ENCODE measurements at regions of chr6 and their contacts with region 1.

Region 1: GRCh38 chr6:109705258-109705657 is 14.2 kb downstream of the FIG4 start:
- H3K4me3 Mint-ChIP-seq: no peak overlapping the region
- H3K27ac Mint-ChIP-seq: peak overlapping the region; percentile 93
- H3K4me1 Mint-ChIP-seq: peaks cover 74% of the 10 kb centered on the region
- H3K27me3 Mint-ChIP-seq: no peaks in the 10 kb centered on the region

Region 2: DNA sequence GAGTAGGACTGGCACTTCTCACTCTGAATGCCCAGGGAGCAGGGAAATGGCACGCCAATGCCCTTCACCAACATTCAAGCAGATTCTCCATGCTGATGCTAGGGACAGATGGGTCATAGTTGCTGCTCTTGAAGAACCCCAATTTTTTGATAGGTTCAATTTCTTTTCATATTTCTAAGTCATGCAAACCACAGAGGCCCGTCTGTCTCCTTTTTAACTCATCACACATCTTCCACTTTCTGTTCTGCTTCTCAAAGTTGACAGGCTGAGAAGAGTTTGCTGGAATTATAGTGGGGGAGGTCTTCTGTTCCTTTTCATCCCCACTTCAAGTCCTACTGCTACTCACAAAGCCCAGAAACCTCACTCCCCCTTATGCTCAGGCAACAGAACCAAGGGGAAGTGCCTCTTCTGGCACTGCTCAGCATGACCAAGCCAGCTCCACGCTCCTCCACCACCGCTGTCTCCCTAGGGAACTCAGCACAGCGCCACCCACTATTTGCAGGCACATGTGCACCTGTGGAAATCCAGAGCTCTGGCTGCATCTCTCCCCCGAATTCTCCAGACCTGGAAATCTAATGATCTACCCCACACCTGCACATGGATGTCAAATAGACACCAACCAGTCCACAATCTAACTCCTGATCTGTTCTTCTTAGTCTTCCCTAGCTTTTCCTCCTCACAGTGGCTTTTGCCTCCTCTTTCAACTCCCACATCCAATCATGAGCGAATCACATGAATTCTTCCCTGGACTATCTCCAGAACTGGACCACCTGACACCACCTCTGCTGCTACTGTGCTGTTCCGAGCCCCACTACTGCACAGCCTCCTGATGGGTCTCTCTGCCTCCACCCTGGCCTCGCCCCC is 232.9 kb before region 1 on chr6:
- intact Hi-C with region 1: no loop called
- H3K4me3 Mint-ChIP-seq: no peak overlapping the region
- H3K27ac Mint-ChIP-seq: no peak overlapping the region
- H3K4me1 Mint-ChIP-seq: peaks cover 26% of the 10 kb centered on the region
- H3K27me3 Mint-ChIP-seq: no peaks in the 10 kb centered on the region

Region 3: GRCh38 chr6:109526905-109527628 is 178.2 kb before region 1 on chr6:
- intact Hi-C with region 1: loop called (anchors 5 kb)
- H3K4me3 Mint-ChIP-seq: no peak overlapping the region
- H3K27ac Mint-ChIP-seq: no peak overlapping the region
- H3K4me1 Mint-ChIP-seq: no peaks in the 10 kb centered on the region
- H3K27me3 Mint-ChIP-seq: no peaks in the 10 kb centered on the region

Region 4: DNA sequence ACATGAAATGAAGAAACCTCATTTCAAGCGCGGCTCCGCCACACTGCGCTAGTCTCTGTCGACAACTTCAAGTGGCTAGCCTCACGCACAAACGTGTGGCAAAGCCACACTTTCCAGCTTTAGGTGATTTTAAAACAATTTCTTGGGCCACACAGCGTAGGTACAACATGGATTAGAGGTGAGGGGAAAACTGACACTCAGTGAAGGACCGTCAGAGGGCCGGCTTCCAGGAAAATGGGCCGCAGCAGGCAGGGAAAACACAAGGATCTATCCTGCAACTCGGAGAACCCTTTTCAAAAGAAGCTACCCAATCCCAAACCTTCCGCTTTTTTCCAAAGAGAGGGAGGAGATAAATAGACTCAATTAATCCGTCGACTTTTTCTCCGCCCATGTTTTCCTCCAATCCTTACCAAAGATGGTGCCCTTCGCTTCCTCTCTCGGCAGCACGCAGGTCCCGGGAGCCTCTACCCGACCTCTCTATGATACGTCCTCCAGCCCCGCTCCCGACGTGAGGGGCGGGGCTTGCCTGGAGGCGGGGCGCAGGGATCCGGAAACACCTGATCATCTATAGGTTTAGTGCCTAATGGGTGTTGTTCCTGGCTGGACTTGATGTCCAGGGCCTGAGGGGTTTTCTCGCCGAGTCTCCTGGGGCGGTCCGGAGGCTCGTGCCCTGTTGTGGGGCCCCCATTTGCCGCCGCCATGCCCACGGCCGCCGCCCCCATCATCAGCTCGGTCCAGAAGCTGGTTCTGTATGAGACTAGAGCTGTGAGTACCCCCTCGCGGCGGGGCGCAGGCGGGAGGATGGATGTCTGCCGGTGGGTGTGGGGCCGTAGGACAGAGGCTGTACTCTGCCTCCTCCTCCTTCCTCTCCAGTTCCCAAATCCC is 14.3 kb before region 1 on chr6 and contains the starts of genes AK9 and FIG4:
- intact Hi-C with region 1: loop called (anchors 1 kb)
- H3K4me3 Mint-ChIP-seq: peak within 1 kb of the TSS; percentile 85
- H3K27ac Mint-ChIP-seq: peak within 1 kb of the TSS; percentile 96
- H3K4me1 Mint-ChIP-seq: peaks cover 48% of the 10 kb centered on the region
- H3K27me3 Mint-ChIP-seq: no peaks in the 10 kb centered on the region

Region 5: DNA sequence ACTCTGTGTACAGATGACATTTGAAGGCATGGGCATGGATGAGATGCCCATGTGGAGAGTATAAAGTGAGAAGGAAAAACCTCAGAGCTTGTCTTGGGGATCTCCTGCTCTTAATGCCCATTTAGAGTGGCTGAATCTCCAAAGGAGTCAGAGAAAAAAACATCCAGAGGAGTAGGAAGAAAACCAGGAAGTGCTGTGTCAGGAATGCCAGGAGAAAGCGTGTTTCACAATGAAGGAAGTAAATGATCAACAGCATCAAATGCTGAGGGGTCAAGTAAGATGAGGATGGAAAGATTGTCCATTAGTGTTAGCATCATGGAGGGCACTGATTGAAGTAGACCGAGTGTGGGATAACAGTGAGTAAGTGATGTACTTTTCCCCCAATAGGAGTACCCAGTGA is 42.0 kb after region 1 on chr6:
- intact Hi-C with region 1: no loop called
- H3K4me3 Mint-ChIP-seq: no peak overlapping the region
- H3K27ac Mint-ChIP-seq: no peak overlapping the region
- H3K4me1 Mint-ChIP-seq: no peaks in the 10 kb centered on the region
- H3K27me3 Mint-ChIP-seq: no peaks in the 10 kb centered on the region

Region 6: DNA sequence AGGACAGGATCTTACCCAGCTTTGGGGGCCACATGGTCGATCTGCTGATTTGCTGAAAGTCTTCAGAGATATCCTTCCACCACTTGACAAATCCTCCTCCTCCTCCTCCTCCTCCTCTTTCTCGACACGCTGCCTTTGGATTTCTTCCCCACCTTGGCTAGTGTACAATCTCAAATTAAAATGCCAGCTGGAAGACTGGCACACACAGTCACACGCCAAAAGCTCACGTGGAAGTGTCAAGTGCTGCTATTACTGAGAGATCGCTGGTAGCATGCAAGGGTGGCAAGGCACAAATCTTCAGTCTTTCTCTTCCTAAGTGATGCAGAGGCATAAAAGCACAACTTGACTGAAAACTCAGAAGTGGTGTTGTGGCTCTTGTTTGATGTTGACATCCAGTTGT is 308.1 kb after region 1 on chr6:
- intact Hi-C with region 1: no loop called
- H3K4me3 Mint-ChIP-seq: no peak overlapping the region
- H3K27ac Mint-ChIP-seq: no peak overlapping the region
- H3K4me1 Mint-ChIP-seq: no peaks in the 10 kb centered on the region
- H3K27me3 Mint-ChIP-seq: no peaks in the 10 kb centered on the region

Region 7: DNA sequence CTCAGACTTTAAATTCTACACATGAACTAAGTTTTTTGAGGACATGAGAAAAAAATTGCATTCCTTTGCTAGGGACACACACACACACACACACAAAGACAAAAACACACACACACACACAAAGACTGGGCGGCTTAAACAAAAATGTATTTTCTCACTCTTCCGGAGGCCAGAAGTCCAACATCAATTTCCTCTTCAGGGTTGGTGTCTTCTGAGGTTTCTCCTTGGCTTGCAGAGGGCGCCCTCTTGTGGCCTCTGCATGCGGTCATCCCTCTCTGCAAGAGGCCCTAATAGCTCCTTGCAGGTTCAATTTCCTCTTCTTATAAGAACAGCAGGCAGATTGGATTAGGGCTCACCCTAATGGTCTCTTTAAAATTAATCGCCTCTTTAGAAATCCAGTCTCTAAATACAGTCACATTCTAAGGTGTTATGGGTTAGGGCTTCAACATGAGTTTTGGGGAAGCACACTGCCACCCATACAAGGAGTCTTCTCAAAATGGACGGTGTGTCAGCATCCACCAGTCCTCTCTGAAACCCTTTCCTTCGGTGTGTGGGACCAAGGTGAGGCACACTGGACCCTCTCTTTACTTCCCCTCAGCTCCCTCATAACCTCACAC is 334.2 kb after region 1 on chr6:
- intact Hi-C with region 1: loop called (anchors 1 kb)
- H3K4me3 Mint-ChIP-seq: peak overlapping the region; percentile 70
- H3K27ac Mint-ChIP-seq: peak overlapping the region; percentile 70
- H3K4me1 Mint-ChIP-seq: peaks cover 28% of the 10 kb centered on the region
- H3K27me3 Mint-ChIP-seq: peaks cover 7% of the 10 kb centered on the region

Region 8: GRCh38 chr6:110398778-110399177 is 693.5 kb after region 1 on chr6:
- intact Hi-C with region 1: loop called (anchors 10 kb)
- H3K4me3 Mint-ChIP-seq: no peak overlapping the region
- H3K27ac Mint-ChIP-seq: no peak overlapping the region
- H3K4me1 Mint-ChIP-seq: peaks cover 15% of the 10 kb centered on the region
- H3K27me3 Mint-ChIP-seq: no peaks in the 10 kb centered on the region